Activated CD4-positive, alpha-beta T cell treated with anti-CD3 and anti-CD28 coated beads for 36 hours (primary cell): ENCODE measurements at regions of chr15 and their contacts with region 1.

Region 1: DNA sequence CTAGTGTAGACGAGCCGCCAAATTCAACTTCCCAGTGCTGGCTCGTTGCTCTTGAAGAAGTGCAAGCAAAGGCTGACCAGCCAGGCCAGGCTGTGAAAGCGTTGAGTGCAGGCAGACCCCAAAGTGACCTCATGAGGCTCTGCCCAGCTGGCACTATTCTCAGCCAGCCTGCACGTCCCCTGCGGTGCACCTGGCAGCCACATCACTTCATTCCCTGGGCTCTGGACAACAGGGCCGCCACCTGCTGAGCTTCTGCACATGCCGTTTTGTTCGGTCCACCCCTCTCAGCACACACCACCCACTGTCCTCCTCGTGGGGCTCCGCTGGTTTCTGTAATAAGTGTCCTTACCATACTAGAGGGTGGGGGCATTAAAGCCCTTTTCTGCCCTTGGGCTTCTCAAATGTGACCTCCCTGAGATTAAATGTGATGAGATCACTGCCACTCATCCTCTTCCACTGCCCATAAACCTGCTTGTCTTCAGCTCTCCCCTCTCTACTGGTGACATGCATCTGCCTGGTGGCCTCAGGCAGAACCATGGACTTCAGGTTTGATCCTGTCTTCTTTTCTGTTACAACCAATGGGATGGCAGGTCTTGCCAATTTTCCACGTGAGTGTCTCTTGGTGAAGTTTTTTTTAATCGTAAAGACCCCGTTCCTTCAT is 6.1 kb downstream of the RASGRF1 start:
- DNase-seq: no peak
- ATAC-seq: no peak
- H3K4me3 Mint-ChIP-seq: no peak overlapping the region
- H3K27ac Mint-ChIP-seq: no peak overlapping the region
- H3K4me1 Mint-ChIP-seq: no peaks in the 10 kb centered on the region
- H3K27me3 Mint-ChIP-seq: peaks cover 26% of the 10 kb centered on the region

Region 2: GRCh38 chr15:79058260-79058829 is 26.1 kb before region 1 on chr15:
- CTCF ChIA-PET with region 1: no interaction called
- POLR2A ChIA-PET with region 1: no interaction called
- intact Hi-C with region 1: loop called in 1 of 2 experiments (anchors 1 kb)
- DNase-seq: no peak
- ATAC-seq: no peak
- H3K4me3 Mint-ChIP-seq: no peak overlapping the region
- H3K27ac Mint-ChIP-seq: no peak overlapping the region
- H3K4me1 Mint-ChIP-seq: no peaks in the 10 kb centered on the region
- H3K27me3 Mint-ChIP-seq: peaks cover 4% of the 10 kb centered on the region

Region 3: GRCh38 chr15:79113831-79114230 is 29.4 kb after region 1 on chr15:
- CTCF ChIA-PET with region 1: no interaction called
- POLR2A ChIA-PET with region 1: no interaction called
- intact Hi-C with region 1: no loop called
- DNase-seq: no peak
- ATAC-seq: no peak
- H3K4me3 Mint-ChIP-seq: no peak overlapping the region
- H3K27ac Mint-ChIP-seq: no peak overlapping the region
- H3K4me1 Mint-ChIP-seq: no peaks in the 10 kb centered on the region
- H3K27me3 Mint-ChIP-seq: peaks cover 22% of the 10 kb centered on the region

Region 4: GRCh38 chr15:79128556-79128955 is 44.1 kb after region 1 on chr15:
- CTCF ChIA-PET with region 1: no interaction called
- POLR2A ChIA-PET with region 1: no interaction called
- intact Hi-C with region 1: no loop called
- DNase-seq: no peak
- ATAC-seq: no peak
- H3K4me3 Mint-ChIP-seq: no peak overlapping the region
- H3K27ac Mint-ChIP-seq: no peak overlapping the region
- H3K4me1 Mint-ChIP-seq: no peaks in the 10 kb centered on the region
- H3K27me3 Mint-ChIP-seq: peaks cover 33% of the 10 kb centered on the region